ENCODE measurements at regions of chr16 and their contacts with region 1.

Region 1: DNA sequence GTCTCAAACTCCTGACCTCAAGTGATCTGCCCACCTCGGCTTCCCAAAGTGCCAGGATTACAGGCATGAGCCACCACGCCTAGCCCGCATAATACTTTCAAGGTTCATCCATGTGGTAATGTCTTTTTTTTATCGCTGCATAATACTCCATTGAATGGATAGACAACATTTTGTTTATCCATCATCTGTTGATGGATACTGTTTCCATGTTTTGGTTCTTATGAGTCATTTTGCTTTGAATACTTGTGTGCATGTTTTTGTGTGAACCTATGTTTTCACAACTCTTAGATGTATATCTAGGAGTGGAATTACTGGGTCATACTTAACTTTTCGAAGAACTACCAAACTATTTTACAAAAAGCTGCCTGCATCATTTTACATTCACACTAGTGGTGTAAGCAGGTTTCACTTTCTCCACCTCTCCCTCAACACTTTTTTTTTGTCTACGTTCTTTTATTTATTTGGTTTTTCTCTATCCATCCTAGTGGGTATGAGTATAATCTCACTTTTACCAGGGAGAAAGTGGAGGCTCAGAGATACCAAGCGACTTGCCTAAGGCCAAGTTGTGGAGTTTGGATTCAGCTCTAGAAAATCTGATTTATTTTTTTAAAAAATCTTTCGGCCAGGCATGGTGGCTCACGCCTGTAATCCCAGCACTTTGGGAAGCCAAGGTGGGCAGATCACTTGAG is 151.1 kb downstream of the CMIP start:
- DNase-seq: no peak
- ATAC-seq: peak; percentile 69
- H3K4me3 Mint-ChIP-seq: no peak overlapping the region
- H3K27ac Mint-ChIP-seq: peak overlapping the region; percentile 51
- H3K4me1 Mint-ChIP-seq: peaks cover 22% of the 10 kb centered on the region
- H3K27me3 Mint-ChIP-seq: no peaks in the 10 kb centered on the region

Region 2: GRCh38 chr16:81374550-81374949 is 221.2 kb before region 1 on chr16:
- CTCF ChIA-PET with region 1: no interaction called
- POLR2A ChIA-PET with region 1: no interaction called
- intact Hi-C with region 1: no loop called
- DNase-seq: no peak
- ATAC-seq: no peak
- H3K4me3 Mint-ChIP-seq: no peak overlapping the region
- H3K27ac Mint-ChIP-seq: no peak overlapping the region
- H3K4me1 Mint-ChIP-seq: peaks cover 6% of the 10 kb centered on the region
- H3K27me3 Mint-ChIP-seq: no peaks in the 10 kb centered on the region

Region 3: GRCh38 chr16:81493755-81494433 is 101.9 kb before region 1 on chr16:
- CTCF ChIA-PET with region 1: no interaction called
- POLR2A ChIA-PET with region 1: no interaction called
- intact Hi-C with region 1: no loop called
- DNase-seq: peak; percentile 80
- ATAC-seq: peak; percentile 97
- H3K4me3 Mint-ChIP-seq: no peak overlapping the region
- H3K27ac Mint-ChIP-seq: no peak overlapping the region
- H3K4me1 Mint-ChIP-seq: peaks cover 33% of the 10 kb centered on the region
- H3K27me3 Mint-ChIP-seq: no peaks in the 10 kb centered on the region

Region 4: GRCh38 chr16:81551151-81551808 is 44.5 kb before region 1 on chr16:
- CTCF ChIA-PET with region 1: no interaction called
- POLR2A ChIA-PET with region 1: no interaction called
- intact Hi-C with region 1: loop called in 1 of 2 experiments (anchors 1 kb)
- DNase-seq: peak; percentile 46
- ATAC-seq: peak; percentile 83
- H3K4me3 Mint-ChIP-seq: no peak overlapping the region
- H3K27ac Mint-ChIP-seq: peak overlapping the region; percentile 39
- H3K4me1 Mint-ChIP-seq: peaks cover 45% of the 10 kb centered on the region
- H3K27me3 Mint-ChIP-seq: no peaks in the 10 kb centered on the region

Region 5: DNA sequence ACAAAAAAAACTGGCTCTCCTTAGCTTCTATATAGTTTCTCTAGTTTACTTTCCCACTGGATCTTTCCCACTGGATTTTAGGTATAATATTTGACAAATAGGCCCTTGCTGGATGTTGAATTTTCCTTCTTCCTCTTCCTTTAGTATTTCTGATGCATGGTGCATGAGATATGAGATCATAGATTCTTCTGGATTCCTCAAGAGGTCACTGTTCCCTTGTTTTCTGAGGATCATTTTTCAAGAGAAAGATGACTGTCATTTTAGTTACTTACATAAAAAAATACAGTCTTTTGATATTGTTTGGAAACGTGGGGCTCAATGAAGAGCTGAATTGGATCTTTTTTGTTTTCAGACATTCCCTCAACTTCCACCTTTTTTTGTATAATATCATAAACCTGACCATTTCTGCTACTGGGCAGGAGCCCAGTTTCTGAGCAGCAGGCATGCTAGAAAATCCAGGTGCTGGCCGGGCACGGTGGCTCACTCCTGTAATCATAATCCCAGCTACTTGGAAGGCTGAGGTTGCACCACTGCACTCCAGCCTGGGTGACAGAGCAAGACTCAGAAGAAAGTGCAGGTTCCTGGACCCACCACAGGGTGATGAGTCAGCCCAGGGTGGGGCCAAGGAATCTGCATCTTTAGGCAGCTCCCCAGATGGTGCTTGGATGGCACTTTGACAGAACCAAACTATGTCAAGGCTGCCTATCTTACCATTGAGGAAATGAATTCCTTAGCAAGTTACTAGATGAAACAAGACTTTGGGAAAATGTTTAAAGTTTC is 345.2 kb after region 1 on chr16:
- CTCF ChIA-PET with region 1: no interaction called
- POLR2A ChIA-PET with region 1: no interaction called
- intact Hi-C with region 1: no loop called
- DNase-seq: peak; percentile 29
- ATAC-seq: no peak
- H3K4me3 Mint-ChIP-seq: no peak overlapping the region
- H3K27ac Mint-ChIP-seq: no peak overlapping the region
- H3K4me1 Mint-ChIP-seq: no peaks in the 10 kb centered on the region
- H3K27me3 Mint-ChIP-seq: no peaks in the 10 kb centered on the region